ENCODE measurements at regions of chr3 and their contacts with region 1.

Region 1: DNA sequence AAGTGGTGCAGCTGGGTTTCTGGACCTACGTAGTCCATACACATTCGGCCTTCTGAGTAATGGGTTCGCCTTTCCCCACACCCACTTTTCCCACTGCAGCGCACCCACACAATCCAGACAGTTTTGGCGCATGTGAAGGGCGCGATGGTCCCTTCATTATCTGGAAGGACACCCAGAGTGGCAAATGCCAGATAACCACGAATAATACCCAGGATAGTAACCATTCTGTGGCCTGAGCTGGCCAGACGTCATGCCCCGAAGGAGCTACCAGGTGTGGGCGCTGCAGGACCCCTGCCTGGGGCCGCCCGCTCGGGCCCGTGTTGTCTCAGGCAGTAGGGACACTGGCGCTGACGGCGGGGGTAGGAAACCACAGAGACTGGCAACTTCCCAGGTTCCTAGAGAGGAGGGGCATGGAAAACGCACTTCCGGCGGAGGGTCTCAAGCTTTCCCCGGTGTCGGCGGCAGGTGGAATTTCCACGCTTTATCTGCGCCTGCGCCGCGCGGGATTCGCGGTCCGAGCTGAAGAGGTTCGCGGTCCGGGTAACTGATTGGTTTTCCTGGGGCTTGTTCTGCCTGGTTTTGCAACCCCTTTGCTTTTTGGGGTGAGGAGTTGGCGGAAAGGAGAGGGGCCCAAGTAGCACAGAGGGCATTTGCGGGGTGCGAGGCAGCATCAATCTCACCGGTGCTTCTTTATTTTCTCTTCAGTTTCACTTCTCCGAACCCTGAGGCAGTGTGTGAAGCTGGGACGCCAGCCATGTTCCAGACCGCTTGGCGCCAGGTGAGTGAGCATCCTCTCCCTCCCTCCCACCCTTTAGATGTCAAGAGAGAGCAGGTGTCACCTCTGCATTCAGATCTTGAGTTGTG is at the start of gene ZNF620:
- DNase-seq: peak; percentile 26 to 57 (median 34)
- H3K4me3 ChIP-seq: peak within 1 kb of the TSS; percentile 74 to 92
- H3K4me3 Mint-ChIP-seq: peak within 1 kb of the TSS; percentile 95 to 98 (median 97)
- H3K27ac ChIP-seq: peak within 1 kb of the TSS; percentile 44
- H3K27ac Mint-ChIP-seq: peak within 1 kb of the TSS; percentile 70 to 95 (median 92)
- H3K4me1 ChIP-seq: peaks cover 8% of the 10 kb centered on the region
- H3K4me1 Mint-ChIP-seq: peaks cover 8 to 21% (median 14%) of the 10 kb centered on the region in 4 donors
- H3K27me3 ChIP-seq: no peaks in the 10 kb centered on the region
- H3K27me3 Mint-ChIP-seq: no peaks in the 10 kb centered on the region
- total RNA-seq, gene ZNF620: 3.7 to 3.8 TPM

Region 2: DNA sequence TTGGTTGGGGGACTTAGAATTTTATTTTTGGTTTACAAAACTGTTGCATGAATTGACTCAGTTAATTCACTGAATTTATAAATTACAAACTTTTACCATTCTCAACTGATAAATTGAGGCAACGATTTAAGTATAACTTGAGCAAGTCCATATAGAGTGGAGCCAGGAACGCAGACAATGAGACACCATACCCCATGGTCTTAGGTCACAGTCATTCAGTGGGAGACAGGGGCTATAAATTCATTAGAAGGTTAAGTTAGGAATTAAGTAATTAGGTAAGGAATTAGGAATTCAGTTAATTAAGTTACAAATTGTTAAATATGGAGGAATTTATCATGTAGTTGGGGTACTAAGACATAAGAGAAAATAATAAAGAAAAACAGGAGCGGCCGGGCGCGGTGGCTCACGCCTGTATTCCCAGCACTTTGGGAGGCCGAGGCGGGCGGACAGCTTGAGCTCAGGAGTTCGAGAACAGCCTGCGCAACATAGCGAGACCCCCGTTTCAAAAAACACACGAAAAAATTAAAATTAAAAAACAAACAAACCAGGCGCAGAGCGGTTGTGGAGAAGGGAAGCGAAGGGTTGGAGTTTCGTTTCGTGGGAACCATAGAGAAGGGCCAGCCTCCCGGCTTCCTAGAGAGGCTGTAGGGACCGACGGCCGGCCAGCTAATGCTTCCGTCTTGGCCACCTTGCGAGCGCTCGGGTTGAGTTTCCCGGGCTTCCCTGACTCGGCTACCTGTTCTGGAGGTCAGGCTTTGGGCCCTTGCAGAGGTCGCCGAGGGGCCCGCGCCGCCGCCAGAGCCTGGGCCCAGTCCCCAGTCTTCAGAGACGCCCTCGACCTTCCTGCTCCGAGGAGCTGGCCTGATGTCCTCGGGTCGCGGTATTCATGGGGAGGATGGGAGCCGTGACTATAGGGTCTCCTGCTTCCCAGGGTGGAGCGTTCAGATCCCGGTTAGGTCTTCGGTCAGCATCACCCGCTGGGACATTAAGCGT is 29.1 kb before region 1 on chr3 and contains the start of gene ZNF619:
- CTCF ChIA-PET with region 1: interaction called, 5 read pairs
- POLR2A ChIA-PET with region 1: interaction called, 8 read pairs
- intact Hi-C with region 1: loop called (anchors 2 kb)
- DNase-seq: peak; percentile 52 to 67 (median 59)
- H3K4me3 ChIP-seq: peak within 1 kb of the TSS; percentile 19 to 60
- H3K4me3 Mint-ChIP-seq: peak within 1 kb of the TSS; percentile 91 to 95 (median 94)
- H3K27ac ChIP-seq: peak within 1 kb of the TSS; percentile 68
- H3K27ac Mint-ChIP-seq: peak within 1 kb of the TSS; percentile 82 to 98 (median 95)
- H3K4me1 ChIP-seq: peaks cover 16% of the 10 kb centered on the region
- H3K4me1 Mint-ChIP-seq: peaks cover 14 to 38% (median 22%) of the 10 kb centered on the region in 4 donors
- H3K27me3 ChIP-seq: no peaks in the 10 kb centered on the region
- H3K27me3 Mint-ChIP-seq: no peaks in the 10 kb centered on the region
- total RNA-seq, gene ZNF619: 14.0 to 16.6 TPM

Region 3: GRCh38 chr3:40690749-40691451 is 185.1 kb after region 1 on chr3:
- CTCF ChIA-PET with region 1: no interaction called
- POLR2A ChIA-PET with region 1: no interaction called
- intact Hi-C with region 1: no loop called
- DNase-seq: no peak
- H3K4me3 ChIP-seq: no peak overlapping the region
- H3K4me3 Mint-ChIP-seq: no peak overlapping the region
- H3K27ac ChIP-seq: no peak overlapping the region
- H3K27ac Mint-ChIP-seq: no peak overlapping the region
- H3K4me1 ChIP-seq: no peaks in the 10 kb centered on the region
- H3K4me1 Mint-ChIP-seq: no peaks in the 10 kb centered on the region
- H3K27me3 ChIP-seq: no peaks in the 10 kb centered on the region
- H3K27me3 Mint-ChIP-seq: peaks cover 14 to 25% of the 10 kb centered on the region in 2 donors